ENCODE measurements at regions of chr11 and their contacts with region 1.

Region 1: GRCh38 chr11:61711498-61711897 is 31.3 kb downstream of the DAGLA start:
- DNase-seq: no peak
- H3K4me3 ChIP-seq: no peak overlapping the region
- H3K27ac ChIP-seq: no peak overlapping the region
- H3K4me1 ChIP-seq: peaks cover 0 to 20% (median 11%) of the 10 kb centered on the region in 4 experiments; a peak in 5 of 7 replicates
- H3K27me3 ChIP-seq: no peaks in the 10 kb centered on the region
- CTCF ChIP-seq: no peak
- EP300 ChIP-seq: no peak
- POLR2A ChIP-seq: no peak
- RAD21 ChIP-seq: no peak

Region 2: DNA sequence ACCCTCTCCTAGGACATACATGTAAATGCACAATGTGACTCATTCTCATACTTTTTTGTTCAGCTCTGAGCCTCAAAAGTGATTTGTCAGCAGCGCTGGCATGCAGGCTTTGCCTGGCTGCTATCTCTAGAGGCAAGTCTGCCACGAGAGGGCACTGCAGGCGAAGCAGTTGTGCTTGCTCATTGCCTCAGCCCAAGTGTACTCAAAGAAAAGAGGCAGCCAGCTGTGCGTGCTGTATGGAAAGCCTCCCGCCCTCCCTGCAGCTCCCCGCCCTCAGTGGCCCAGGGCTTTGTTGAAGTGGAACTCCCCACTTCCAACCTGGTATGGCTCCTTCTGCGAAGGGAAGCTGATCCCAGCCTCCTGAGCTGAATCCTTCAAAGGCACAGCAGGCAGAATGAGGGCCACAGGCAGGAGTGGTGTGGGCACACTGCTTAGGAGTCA is 265.3 kb before region 1 on chr11:
- CTCF ChIA-PET with region 1: no interaction called
- POLR2A ChIA-PET with region 1: no interaction called
- DNase-seq: peak; percentile 69 to 88
- H3K4me3 ChIP-seq: no peak overlapping the region
- H3K27ac ChIP-seq: no peak overlapping the region
- H3K4me1 ChIP-seq: peaks cover 0 to 3% (median under 1%) of the 10 kb centered on the region in 4 experiments; a peak in 2 of 7 replicates
- H3K27me3 ChIP-seq: no peaks in the 10 kb centered on the region
- CTCF ChIP-seq: peak; percentile 78 to 97 (median 92)
- EP300 ChIP-seq: no peak
- POLR2A ChIP-seq: no peak
- RAD21 ChIP-seq: peak; percentile 83 to 85

Region 3: GRCh38 chr11:61654397-61654829 is 57.1 kb before region 1 on chr11:
- CTCF ChIA-PET with region 1: no interaction called
- POLR2A ChIA-PET with region 1: no interaction called
- DNase-seq: no peak
- H3K4me3 ChIP-seq: no peak overlapping the region
- H3K27ac ChIP-seq: no peak overlapping the region
- H3K4me1 ChIP-seq: peaks cover 6 to 15% (median 10%) of the 10 kb centered on the region in 4 experiments
- H3K27me3 ChIP-seq: no peaks in the 10 kb centered on the region
- CTCF ChIP-seq: no peak
- EP300 ChIP-seq: no peak
- POLR2A ChIP-seq: no peak
- RAD21 ChIP-seq: no peak

Region 4: DNA sequence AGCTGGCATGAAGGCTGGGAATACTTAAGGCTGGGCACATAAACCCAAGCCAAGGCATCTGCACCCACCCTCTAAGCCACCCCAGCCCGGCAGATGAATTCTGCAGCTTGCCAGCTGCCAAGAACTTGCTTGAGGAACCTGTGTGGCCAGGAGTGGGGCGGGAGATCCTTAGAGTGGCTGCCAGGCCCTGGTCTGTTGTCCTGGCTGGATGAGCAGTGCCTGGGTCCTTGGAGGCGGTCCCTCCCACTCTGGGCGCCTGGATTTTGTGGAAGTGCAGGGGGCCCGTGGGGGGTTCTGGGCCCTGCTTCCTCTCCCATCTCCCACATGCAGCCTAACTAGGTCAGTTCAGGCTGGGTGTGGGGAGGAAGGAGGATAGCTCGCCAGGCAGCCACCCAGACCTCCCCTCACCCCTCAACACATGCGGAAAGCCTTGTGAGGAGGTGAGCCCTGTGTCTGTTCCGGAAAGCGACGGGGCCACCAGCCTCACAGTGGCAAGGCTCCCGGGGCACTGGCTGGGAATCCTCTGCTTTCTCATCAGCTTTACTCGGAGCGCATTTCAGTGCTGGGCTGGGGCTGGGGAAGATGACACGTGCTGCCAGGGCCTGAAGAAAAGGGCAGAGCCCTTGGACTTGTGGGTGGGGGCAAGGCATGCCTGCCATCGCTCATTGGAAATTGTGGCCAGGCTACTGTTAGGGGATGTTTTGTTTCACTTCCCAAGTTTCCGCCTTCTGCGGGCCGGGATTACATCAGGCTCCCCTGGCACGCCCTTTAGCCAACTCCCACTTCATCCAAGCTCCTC is 22.9 kb before region 1 on chr11:
- CTCF ChIA-PET with region 1: interaction called, 20 read pairs
- POLR2A ChIA-PET with region 1: interaction called, 3 read pairs
- DNase-seq: no peak
- H3K4me3 ChIP-seq: no peak overlapping the region
- H3K27ac ChIP-seq: no peak overlapping the region
- H3K4me1 ChIP-seq: peaks cover 0 to 16% (median 10%) of the 10 kb centered on the region in 4 experiments; a peak in 4 of 7 replicates
- H3K27me3 ChIP-seq: no peaks in the 10 kb centered on the region; a peak in 1 of 7 replicates
- CTCF ChIP-seq: no peak
- EP300 ChIP-seq: no peak
- POLR2A ChIP-seq: no peak
- RAD21 ChIP-seq: no peak